Psoas muscle (tissue), 8 donors: ENCODE measurements at regions of chr2 and their contacts with region 1.

Region 1: DNA sequence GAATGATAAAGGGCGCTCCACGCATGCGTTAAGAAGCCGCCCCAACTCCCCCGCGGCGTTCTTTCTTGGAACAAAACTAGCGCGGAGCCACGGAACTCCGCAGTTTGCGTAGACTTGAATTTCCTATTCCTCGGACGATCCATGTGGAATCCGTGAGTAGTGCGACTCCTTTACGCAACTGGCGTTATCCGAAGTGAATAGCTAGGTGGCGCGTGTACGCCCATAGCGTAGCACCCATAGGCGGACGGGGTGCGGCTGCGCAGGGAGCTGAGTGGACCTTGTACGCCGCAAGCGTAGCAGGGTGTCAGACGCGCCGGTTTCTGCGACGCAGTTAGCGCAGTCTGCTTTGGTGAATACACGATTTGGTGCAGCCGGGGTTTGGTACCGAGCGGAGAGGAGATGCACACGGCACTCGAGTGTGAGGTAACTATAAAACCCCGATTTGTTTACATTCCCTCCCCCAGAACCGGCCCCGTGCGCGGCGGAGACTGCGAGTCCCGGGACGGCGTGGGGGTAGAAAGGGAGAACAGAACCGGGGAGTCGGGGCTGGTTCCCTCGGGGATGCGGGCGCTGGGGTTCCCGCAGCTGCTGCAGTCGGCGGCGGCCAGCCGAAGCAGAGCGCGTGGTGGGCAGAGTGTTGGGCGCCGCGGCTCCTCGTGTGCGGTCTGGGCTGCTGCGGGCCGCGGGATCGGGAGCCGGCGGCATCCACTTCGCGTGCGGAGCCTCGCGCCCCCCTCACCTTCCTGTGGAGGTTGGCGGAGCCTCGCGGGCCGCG is at the start of gene SLC39A10:
- DNase-seq: peak; percentile 96 to 98
- ATAC-seq: peak; percentile 91 to 94 (median 92)
- H3K4me3 ChIP-seq: peak within 1 kb of the TSS; percentile 92
- H3K27ac ChIP-seq: peak within 1 kb of the TSS; percentile 91
- H3K4me1 ChIP-seq: peaks cover 25% of the 10 kb centered on the region
- H3K27me3 ChIP-seq: no peaks in the 10 kb centered on the region
- CTCF ChIP-seq: no peak
- total RNA-seq, gene SLC39A10: 3.8 to 7.7 (median 6.3) TPM

Region 2: GRCh38 chr2:195498176-195498575 is 158.9 kb before region 1 on chr2:
- intact Hi-C with region 1: loop called in 1 of 2 experiments (anchors 10 kb)
- DNase-seq: no peak
- ATAC-seq: no peak
- H3K4me3 ChIP-seq: no peak overlapping the region
- H3K27ac ChIP-seq: no peak overlapping the region
- H3K4me1 ChIP-seq: no peaks in the 10 kb centered on the region
- H3K27me3 ChIP-seq: no peaks in the 10 kb centered on the region
- CTCF ChIP-seq: peak; percentile 10

Region 3: DNA sequence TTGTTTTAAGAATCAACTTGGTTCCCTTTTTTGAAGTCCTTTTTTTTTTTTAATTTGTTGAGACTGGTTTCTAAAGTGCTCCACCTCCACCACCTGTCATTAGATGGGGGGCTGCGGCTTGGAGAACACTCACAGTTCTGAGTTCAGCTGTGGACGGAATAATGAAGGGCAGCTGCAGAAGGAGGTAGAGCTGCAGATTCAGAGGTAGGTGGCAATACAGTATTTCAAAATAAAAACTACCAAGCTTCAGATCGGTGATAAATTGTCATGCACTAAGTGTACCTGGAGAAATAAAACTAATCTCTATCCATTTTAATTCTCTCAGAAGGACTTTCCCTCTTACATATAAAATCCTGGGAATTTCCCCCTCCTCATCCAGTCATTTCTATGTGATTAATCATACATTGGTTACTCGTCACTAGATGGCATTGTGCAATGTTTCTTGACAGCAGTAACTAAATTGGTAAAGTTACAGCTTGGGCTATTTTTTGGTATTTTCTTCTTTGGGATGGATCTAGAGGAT is 81.1 kb before region 1 on chr2:
- intact Hi-C with region 1: loop called in 1 of 2 experiments (anchors 5 kb)
- DNase-seq: no peak
- ATAC-seq: no peak
- H3K4me3 ChIP-seq: no peak overlapping the region
- H3K27ac ChIP-seq: no peak overlapping the region
- H3K4me1 ChIP-seq: peaks cover 3% of the 10 kb centered on the region
- H3K27me3 ChIP-seq: no peaks in the 10 kb centered on the region
- CTCF ChIP-seq: no peak